Aorta (tissue), 5 donors: ENCODE measurements at regions of chr12 and their contacts with region 1.

Region 1: GRCh38 chr12:13661005-13661887 is 320.2 kb downstream of the GRIN2B start:
- DNase-seq: peak in 1 of 2 donors; percentile 51
- ATAC-seq: no peak
- H3K4me3 ChIP-seq: no peak overlapping the region
- H3K27ac ChIP-seq: no peak overlapping the region
- H3K4me1 ChIP-seq: no peaks in the 10 kb centered on the region
- H3K27me3 ChIP-seq: no peaks in the 10 kb centered on the region

Region 2: GRCh38 chr12:13255792-13256691 is 405.2 kb before region 1 on chr12:
- intact Hi-C with region 1: loop called (anchors 10 kb)
- DNase-seq: peak; percentile 96 to 98
- ATAC-seq: peak; percentile 98
- H3K4me3 ChIP-seq: no peak overlapping the region
- H3K27ac ChIP-seq: no peak overlapping the region
- H3K4me1 ChIP-seq: no peaks in the 10 kb centered on the region
- H3K27me3 ChIP-seq: no peaks in the 10 kb centered on the region

Region 3: DNA sequence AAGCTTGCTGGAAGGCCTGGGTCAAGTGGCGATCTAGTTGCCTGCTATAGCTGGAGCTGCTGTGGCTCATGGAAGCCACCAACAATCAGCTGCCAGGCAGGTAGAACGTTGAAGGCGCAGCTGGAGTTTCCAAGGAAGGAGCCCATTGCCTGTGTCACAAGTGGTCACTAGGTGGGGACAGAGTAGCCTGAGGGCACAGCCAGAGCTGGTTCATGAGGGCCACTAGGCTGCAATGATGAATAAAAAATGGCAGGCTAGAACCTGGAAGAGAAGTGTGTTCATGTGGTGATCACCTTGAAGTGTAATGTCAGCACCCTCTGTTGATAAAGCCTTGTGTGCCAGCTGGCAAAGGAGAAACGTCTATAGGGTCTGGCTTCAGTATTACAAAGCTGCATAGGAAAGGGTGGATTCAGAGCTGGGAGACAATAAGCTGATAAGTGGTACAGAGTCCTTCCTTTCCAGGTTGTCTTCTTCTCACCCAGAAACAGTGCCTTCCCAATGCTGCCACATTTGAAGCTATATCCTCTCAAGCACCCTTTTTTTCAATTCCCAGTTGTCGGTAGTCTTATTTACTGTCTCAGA is 298.9 kb before region 1 on chr12:
- intact Hi-C with region 1: loop called (anchors 5 kb)
- DNase-seq: peak in 1 of 2 donors; percentile 79
- ATAC-seq: peak; percentile 81
- H3K4me3 ChIP-seq: no peak overlapping the region
- H3K27ac ChIP-seq: no peak overlapping the region
- H3K4me1 ChIP-seq: no peaks in the 10 kb centered on the region
- H3K27me3 ChIP-seq: no peaks in the 10 kb centered on the region